Right ventricle myocardium inferior (tissue), 1 donor: ENCODE measurements at regions of chr6 and their contacts with region 1.

Region 1: DNA sequence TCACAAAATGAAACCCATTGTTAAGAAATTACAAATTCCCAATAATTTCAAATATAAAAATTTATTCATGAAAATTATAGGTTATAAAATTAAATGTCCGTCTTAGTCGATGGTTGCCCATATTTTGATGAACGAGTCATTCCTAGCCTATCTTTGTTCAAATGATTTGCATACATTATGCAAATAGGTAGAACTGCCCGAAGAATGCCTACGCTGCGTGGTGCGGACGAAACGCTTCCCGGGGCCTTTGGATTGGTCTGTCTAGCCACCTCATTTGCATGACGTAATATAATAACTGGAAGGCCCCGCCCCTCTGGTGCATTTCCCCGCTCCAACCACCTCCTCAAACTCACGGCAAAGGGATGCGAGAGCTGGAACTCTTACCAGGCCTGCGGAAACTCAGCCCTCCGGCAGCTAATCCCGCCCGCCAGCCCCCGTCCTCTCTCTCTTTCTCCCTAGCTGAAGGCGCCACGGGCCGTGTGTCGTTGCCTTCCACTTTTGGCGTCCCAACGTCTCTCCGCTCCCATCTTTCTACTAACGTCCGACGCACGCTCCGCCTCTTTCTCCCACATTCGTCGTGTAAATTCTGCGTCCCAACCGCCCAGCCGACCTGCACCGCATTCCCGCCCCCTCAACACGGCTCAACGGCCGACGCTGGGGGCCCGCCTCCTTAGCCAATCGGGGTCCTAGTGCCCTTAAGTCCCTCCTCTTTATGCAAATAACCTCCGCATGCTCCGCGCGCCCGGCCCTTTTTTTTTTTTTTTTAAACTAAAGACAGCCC is 520 bp upstream of the PRRC2A start:
- DNase-seq: peak; percentile 99
- ATAC-seq: peak; percentile 95

Region 2: DNA sequence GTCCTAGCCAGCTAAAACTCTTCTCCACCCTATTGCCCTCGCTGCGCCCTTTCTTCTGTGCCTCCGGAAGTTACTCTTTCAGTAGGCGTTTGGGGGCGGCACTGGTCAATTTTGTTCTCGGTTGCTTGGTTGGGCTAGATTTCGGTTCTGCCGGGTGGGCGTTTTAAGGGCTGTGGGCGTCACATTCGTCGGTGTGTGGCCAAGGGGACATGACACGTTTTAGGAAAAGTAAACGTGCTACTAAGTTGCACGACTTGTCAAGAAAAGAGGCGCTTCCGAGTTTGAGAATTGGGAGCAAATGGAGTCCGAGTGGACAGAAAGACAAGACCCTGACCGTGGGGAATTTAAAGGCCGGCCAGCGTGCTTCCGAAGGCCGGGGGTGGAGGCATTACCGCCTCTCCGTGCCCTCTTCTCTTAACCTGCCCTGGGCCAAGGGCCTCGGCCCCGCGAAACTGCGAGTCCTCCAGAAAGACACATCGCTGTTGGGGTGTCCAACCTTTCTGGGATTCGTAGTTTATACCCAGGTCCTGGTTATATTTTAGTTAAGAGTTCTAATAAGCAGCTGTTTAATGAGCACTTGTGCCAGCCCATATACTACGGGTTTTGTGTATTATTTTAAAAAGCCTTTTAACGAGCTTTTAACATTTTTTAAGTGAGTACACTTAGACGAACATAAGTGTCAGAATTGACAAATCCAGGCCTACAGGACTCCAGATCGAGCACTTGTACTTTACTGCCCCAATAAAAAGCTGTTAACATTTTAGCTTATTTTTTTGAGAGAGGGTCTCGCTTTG is 33.1 kb after region 1 on chr6:
- intact Hi-C with region 1: loop called (anchors 1 kb)
- DNase-seq: peak; percentile 90
- ATAC-seq: peak; percentile 86

Region 3: GRCh38 chr6:31692886-31693285 is 72.9 kb after region 1 on chr6:
- intact Hi-C with region 1: no loop called
- DNase-seq: no peak
- ATAC-seq: no peak

Region 4: DNA sequence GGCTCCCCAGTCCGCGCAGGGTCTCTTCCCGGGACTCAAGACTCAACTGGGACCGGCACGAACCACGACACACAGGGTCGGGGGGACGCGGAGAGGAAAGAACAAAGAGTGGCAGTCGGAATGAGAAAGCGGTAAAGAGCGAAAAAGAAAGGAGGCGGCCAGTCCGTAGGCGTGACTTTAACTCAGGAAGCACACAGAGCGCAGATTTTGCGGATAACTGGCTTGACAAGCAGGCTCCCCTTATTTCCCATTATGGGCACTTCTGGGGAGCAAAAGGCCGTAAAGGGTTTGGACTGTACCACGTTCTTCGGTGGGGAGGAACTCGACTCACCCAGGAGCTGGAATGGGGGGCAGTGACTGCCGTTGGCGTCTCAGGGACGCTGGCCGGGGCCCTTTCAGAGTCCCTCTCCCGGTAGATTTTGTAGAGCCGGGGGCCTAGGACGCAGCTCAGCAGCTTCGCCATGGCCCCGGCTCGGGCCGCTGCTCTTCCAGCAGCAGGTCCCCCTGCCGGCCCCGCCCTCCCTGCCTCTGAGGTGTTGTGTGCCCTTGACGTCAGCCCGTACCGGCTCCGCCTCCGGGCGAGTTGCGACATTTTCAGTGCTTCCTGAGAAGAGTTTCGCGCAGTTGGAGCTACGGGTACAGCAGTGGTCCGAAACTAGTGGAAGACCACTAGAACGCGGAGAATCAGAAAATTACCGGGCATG is 83.0 kb after region 1 on chr6 and contains the start of gene ABHD16A:
- intact Hi-C with region 1: loop called (anchors 5 kb)
- DNase-seq: peak; percentile 100
- ATAC-seq: peak; percentile 98
- total RNA-seq, gene ABHD16A: 26.9 TPM

Region 5: GRCh38 chr6:31901953-31902643 is 282.1 kb after region 1 on chr6 and contains the start of gene ZBTB12:
- intact Hi-C with region 1: loop called (anchors 1 kb)
- DNase-seq: peak; percentile 93
- ATAC-seq: peak; percentile 85
- total RNA-seq, gene ZBTB12: 3.2 TPM